GM12878 (cell line): ENCODE measurements at regions of chr12 and their contacts with region 1.

Region 1: DNA sequence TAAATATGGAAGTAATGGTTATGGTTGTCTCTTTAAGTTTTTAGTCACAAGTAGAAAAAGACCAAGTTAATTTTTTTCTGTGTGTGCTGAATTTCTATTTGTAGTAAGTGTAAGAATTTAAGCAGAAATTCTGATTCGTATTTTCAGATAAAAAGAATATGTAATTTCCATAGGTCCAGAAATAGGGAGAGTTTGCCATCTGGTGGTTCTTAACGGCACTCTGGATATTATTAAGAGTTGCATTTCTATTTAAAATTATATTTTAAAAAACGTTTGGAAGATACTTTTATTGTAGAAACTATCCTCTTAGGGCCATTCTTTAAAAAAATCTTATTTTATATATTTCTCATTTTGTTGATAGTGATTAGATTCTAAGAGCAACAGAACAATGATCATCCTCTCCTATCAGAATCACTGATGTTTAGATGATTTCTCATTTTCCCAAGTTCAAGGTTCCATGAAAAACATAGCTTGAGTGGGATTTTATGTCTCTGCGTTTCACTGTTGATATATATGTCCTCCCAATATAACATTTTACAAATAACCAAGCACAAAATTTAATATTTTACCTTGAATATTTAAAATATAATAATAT is 88.3 kb downstream of the LRRK2 start:
- DNase-seq: no peak
- ATAC-seq: peak; percentile 51; the same call in 2 of the 3 replicates
- H3K4me3 ChIP-seq: no peak overlapping the region
- H3K27ac ChIP-seq: no peak overlapping the region
- H3K4me1 ChIP-seq: peaks cover 16% of the 10 kb centered on the region
- H3K27me3 ChIP-seq: peaks cover 0 to 2% of the 10 kb centered on the region in 2 experiments; a peak in 1 of 4 replicates
- CTCF ChIP-seq: peak; percentile 13 to 54 (median 26); a peak in 2 of 6 replicates
- EP300 ChIP-seq: no peak
- POLR2A ChIP-seq: no peak
- RAD21 ChIP-seq: peak; percentile 78

Region 2: DNA sequence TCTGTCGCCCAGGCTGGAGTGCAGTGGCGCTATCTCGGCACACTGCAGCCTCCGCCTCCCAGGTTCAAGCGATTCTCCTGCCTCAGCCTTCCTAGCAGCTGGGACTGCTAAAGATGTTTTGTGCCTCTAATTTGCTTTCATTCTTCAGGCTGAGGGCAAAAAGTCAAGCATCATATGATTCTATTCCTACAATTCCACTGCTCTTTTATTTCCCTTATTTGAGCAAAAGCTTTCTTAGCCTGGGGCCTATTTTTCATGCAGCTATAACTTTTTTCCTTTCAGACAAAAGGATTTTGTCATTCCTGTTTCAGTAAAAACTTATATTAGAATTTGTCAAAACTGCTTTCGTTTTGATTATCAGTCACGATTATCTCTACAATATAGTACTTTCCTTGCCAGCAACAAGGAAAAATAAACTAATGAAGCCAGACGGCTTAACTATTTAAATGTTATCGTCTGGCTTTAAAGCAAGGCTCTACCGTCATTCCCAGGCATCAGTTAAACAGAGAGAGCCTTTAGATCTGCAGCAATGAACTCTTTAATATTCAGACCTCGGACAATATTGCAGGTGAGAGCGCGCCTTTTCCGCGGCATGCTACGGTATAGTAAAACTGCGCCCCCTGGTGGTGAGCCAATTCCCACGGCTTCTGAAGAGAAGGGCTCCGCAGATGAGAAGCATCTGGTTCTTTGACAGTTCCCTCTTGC is 205.8 kb before region 1 on chr12:
- CTCF ChIA-PET with region 1: interaction called, 13 read pairs
- POLR2A ChIA-PET with region 1: no interaction called
- RAD21 ChIA-PET with region 1: interaction called, 10 read pairs
- SMC1A ChIA-PET with region 1: interaction called, 4 read pairs
- in situ Hi-C with region 1: no loop called
- intact Hi-C with region 1: no loop called
- DNase-seq: peak; percentile 42
- ATAC-seq: peak; percentile 64
- H3K4me3 ChIP-seq: peak overlapping the region; percentile 33
- H3K27ac ChIP-seq: no peak overlapping the region
- H3K4me1 ChIP-seq: peaks cover 11% of the 10 kb centered on the region
- H3K27me3 ChIP-seq: peaks cover 0 to 13% of the 10 kb centered on the region in 2 experiments; a peak in 2 of 4 replicates
- CTCF ChIP-seq: peak; percentile 77 to 87 (median 86)
- EP300 ChIP-seq: no peak
- POLR2A ChIP-seq: no peak
- RAD21 ChIP-seq: peak; percentile 63

Region 3: GRCh38 chr12:40158592-40159111 is 154.4 kb before region 1 on chr12:
- CTCF ChIA-PET with region 1: interaction called, 15 read pairs
- POLR2A ChIA-PET with region 1: no interaction called
- RAD21 ChIA-PET with region 1: interaction called, 72 read pairs
- SMC1A ChIA-PET with region 1: interaction called, 66 read pairs
- in situ Hi-C with region 1: loop called (anchors 5 kb)
- intact Hi-C with region 1: loop called (anchors 1 kb)
- DNase-seq: no peak
- ATAC-seq: peak; percentile 84
- H3K4me3 ChIP-seq: no peak overlapping the region
- H3K27ac ChIP-seq: peak overlapping the region; percentile 53; the same call in 1 of the 2 replicates
- H3K4me1 ChIP-seq: peaks cover 10% of the 10 kb centered on the region
- H3K27me3 ChIP-seq: no peaks in the 10 kb centered on the region
- CTCF ChIP-seq: no peak
- EP300 ChIP-seq: no peak
- POLR2A ChIP-seq: no peak
- RAD21 ChIP-seq: no peak

Region 4: GRCh38 chr12:40224439-40225291 is 88.4 kb before region 1 on chr12 and contains the start of gene LRRK2:
- CTCF ChIA-PET with region 1: interaction called, 13 read pairs
- POLR2A ChIA-PET with region 1: interaction called, 4 read pairs
- RAD21 ChIA-PET with region 1: interaction called, 20 read pairs
- SMC1A ChIA-PET with region 1: interaction called, 25 read pairs
- in situ Hi-C with region 1: no loop called
- intact Hi-C with region 1: loop called (anchors 2 kb)
- DNase-seq: no peak
- ATAC-seq: peak; percentile 69
- H3K4me3 ChIP-seq: peak within 1 kb of the TSS; percentile 59
- H3K27ac ChIP-seq: peak within 1 kb of the TSS; percentile 46
- H3K4me1 ChIP-seq: peaks cover 9% of the 10 kb centered on the region
- H3K27me3 ChIP-seq: peaks cover 0 to 17% of the 10 kb centered on the region in 2 experiments; a peak in 1 of 4 replicates
- CTCF ChIP-seq: no peak
- EP300 ChIP-seq: peak; percentile 61 to 70; a peak in 2 of 4 replicates
- POLR2A ChIP-seq: peak; percentile 61
- RAD21 ChIP-seq: no peak
- polyA plus RNA-seq, gene LRRK2: 0.97 to 1.1 TPM

Region 5: DNA sequence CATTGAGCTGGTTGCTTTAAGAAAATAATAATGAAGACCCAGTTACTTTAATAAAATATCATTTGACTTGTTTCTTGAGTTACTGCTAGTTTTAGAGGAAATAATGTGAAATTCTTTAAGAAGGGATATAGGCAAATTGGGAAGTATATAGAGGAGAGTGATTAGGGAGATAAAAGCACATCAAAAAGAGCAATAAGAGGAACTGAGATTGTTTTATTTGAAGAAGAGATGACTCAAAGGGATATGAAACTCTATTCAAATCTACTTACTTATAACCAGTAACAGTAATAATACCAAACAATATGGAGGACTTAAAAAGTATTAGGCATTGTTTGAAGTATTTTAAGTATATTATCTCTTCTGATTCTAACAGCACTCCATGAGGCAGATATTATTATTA is 51.1 kb before region 1 on chr12:
- CTCF ChIA-PET with region 1: interaction called, 6 read pairs
- POLR2A ChIA-PET with region 1: no interaction called
- RAD21 ChIA-PET with region 1: interaction called, 6 read pairs
- SMC1A ChIA-PET with region 1: interaction called, 17 read pairs
- in situ Hi-C with region 1: no loop called
- intact Hi-C with region 1: no loop called
- DNase-seq: no peak
- ATAC-seq: peak; percentile 84
- H3K4me3 ChIP-seq: no peak overlapping the region
- H3K27ac ChIP-seq: no peak overlapping the region
- H3K4me1 ChIP-seq: peaks cover 13% of the 10 kb centered on the region
- H3K27me3 ChIP-seq: no peaks in the 10 kb centered on the region
- CTCF ChIP-seq: no peak
- EP300 ChIP-seq: peak; percentile 50 to 72
- POLR2A ChIP-seq: no peak
- RAD21 ChIP-seq: no peak

Region 6: GRCh38 chr12:40336573-40337199 is 23.6 kb after region 1 on chr12:
- CTCF ChIA-PET with region 1: interaction called, 10 read pairs
- POLR2A ChIA-PET with region 1: no interaction called
- RAD21 ChIA-PET with region 1: no interaction called
- SMC1A ChIA-PET with region 1: interaction called, 11 read pairs
- in situ Hi-C with region 1: no loop called
- intact Hi-C with region 1: no loop called
- DNase-seq: no peak
- ATAC-seq: peak; percentile 77
- H3K4me3 ChIP-seq: no peak overlapping the region
- H3K27ac ChIP-seq: no peak overlapping the region
- H3K4me1 ChIP-seq: no peaks in the 10 kb centered on the region
- H3K27me3 ChIP-seq: no peaks in the 10 kb centered on the region
- CTCF ChIP-seq: peak; percentile 40 to 47 (median 41); a peak in 5 of 6 replicates
- EP300 ChIP-seq: no peak
- POLR2A ChIP-seq: no peak
- RAD21 ChIP-seq: peak; percentile 50